Psoas muscle (tissue), 8 donors: ENCODE measurements at regions of chr4 and their contacts with region 1.

Region 1: DNA sequence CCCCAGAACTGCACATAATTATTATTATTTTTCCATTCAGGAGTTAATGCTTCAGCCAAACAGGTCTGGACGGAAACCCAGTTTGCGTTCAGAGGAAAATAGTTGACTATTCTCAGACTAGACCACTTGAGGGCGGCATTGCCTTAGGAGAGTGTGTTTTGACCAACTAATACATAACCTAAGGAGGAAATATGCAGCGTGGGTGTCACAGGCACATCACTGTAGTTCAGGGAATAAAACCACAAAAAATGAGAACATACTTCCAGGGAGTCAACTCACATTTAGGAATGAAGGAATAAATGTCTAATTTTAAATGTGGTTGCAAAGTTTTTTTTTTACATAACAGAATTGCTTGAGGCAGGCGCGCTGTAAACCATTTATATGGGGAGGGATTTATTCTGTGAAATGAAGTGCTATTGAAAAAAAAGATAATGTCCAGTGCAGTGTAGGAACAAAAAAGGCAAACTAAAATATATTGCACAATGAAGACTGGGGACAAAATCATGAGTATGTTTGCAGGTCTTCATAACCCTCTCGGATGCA is 93.3 kb downstream of the SYNPO2 start:
- DNase-seq: peak in 1 of 2 donors; percentile 60
- ATAC-seq: peak; percentile 65 to 74 (median 70)
- H3K4me3 ChIP-seq: peak overlapping the region; percentile 57
- H3K27ac ChIP-seq: peak overlapping the region; percentile 95
- H3K4me1 ChIP-seq: peaks cover 69% of the 10 kb centered on the region
- H3K27me3 ChIP-seq: no peaks in the 10 kb centered on the region
- CTCF ChIP-seq: peak; percentile 81

Region 2: DNA sequence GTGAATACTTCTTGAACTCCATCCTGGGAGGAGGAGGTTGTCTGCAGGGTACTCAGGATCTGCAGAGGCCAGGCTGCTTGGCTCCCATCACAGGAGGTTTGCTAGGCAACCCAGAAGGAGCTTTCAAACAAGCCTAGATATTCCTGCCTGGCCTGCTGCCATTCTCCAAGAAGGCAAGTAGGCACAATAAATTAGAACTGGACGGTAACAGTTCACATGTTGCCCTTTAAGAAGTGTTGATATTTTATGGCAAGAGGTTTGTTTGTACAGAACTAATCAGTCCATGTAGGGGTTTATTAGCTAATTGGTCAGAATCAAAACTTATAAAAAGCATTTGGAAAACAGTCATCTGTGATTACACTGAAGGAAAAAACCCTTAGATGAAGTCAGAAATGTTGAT is 53.9 kb before region 1 on chr4:
- intact Hi-C with region 1: no loop called
- DNase-seq: no peak
- ATAC-seq: peak in 2 of 4 donors; percentile 50 to 66
- H3K4me3 ChIP-seq: no peak overlapping the region
- H3K27ac ChIP-seq: no peak overlapping the region
- H3K4me1 ChIP-seq: peaks cover 17% of the 10 kb centered on the region
- H3K27me3 ChIP-seq: no peaks in the 10 kb centered on the region
- CTCF ChIP-seq: no peak

Region 3: GRCh38 chr4:119034276-119035008 is 52.5 kb after region 1 on chr4:
- intact Hi-C with region 1: loop called in 1 of 2 experiments (anchors 5 kb)
- DNase-seq: no peak
- ATAC-seq: peak; percentile 15 to 48 (median 20)
- H3K4me3 ChIP-seq: peak overlapping the region; percentile 77
- H3K27ac ChIP-seq: peak overlapping the region; percentile 98
- H3K4me1 ChIP-seq: peaks cover 36% of the 10 kb centered on the region
- H3K27me3 ChIP-seq: no peaks in the 10 kb centered on the region
- CTCF ChIP-seq: peak; percentile 27

Region 4: GRCh38 chr4:119041951-119042560 is 60.1 kb after region 1 on chr4:
- intact Hi-C with region 1: loop called in 1 of 2 experiments (anchors 2 kb)
- DNase-seq: no peak
- ATAC-seq: peak; percentile 61 to 68 (median 64)
- H3K4me3 ChIP-seq: peak overlapping the region; percentile 40
- H3K27ac ChIP-seq: peak overlapping the region; percentile 98
- H3K4me1 ChIP-seq: peaks cover 66% of the 10 kb centered on the region
- H3K27me3 ChIP-seq: no peaks in the 10 kb centered on the region
- CTCF ChIP-seq: peak; percentile 72

Region 5: DNA sequence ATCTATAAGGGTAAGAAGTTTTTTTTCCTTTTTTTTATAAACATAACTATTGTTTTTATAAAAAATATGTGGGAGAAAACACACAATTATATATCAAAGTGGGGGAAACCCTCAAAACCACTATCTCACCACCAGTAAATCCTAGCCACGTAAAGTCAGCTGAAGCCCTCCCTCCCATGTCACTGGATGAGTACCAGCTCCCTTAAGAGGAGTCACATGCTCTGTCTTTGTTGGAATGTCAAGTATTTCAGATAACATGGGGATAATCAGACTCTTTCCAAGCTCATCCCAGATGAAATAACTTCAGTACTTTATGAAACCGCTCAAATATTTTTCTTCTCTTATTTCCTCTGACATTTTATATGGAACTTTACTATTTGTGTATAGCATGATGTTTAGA is 156.1 kb after region 1 on chr4:
- intact Hi-C with region 1: loop called in 1 of 2 experiments (anchors 10 kb)
- DNase-seq: no peak
- ATAC-seq: no peak
- H3K4me3 ChIP-seq: peak overlapping the region; percentile 50
- H3K27ac ChIP-seq: peak overlapping the region; percentile 72
- H3K4me1 ChIP-seq: peaks cover 31% of the 10 kb centered on the region
- H3K27me3 ChIP-seq: no peaks in the 10 kb centered on the region
- CTCF ChIP-seq: no peak

Region 6: GRCh38 chr4:119149110-119149509 is 167.2 kb after region 1 on chr4:
- intact Hi-C with region 1: loop called (anchors 5 to 10 kb)
- DNase-seq: no peak
- ATAC-seq: peak; percentile 21 to 55 (median 42)
- H3K4me3 ChIP-seq: no peak overlapping the region
- H3K27ac ChIP-seq: peak overlapping the region; percentile 69
- H3K4me1 ChIP-seq: no peaks in the 10 kb centered on the region
- H3K27me3 ChIP-seq: no peaks in the 10 kb centered on the region
- CTCF ChIP-seq: no peak

Region 7: GRCh38 chr4:119212234-119212963 is 230.5 kb after region 1 on chr4 and contains the start of gene USP53:
- intact Hi-C with region 1: loop called (anchors 2 to 10 kb)
- DNase-seq: peak; percentile 96 to 98
- ATAC-seq: peak; percentile 93 to 96 (median 96)
- H3K4me3 ChIP-seq: peak within 1 kb of the TSS; percentile 91
- H3K27ac ChIP-seq: peak within 1 kb of the TSS; percentile 99
- H3K4me1 ChIP-seq: peaks cover 23% of the 10 kb centered on the region
- H3K27me3 ChIP-seq: no peaks in the 10 kb centered on the region
- CTCF ChIP-seq: no peak
- total RNA-seq, gene USP53: 43.8 to 89.5 (median 57.3) TPM

Region 8: DNA sequence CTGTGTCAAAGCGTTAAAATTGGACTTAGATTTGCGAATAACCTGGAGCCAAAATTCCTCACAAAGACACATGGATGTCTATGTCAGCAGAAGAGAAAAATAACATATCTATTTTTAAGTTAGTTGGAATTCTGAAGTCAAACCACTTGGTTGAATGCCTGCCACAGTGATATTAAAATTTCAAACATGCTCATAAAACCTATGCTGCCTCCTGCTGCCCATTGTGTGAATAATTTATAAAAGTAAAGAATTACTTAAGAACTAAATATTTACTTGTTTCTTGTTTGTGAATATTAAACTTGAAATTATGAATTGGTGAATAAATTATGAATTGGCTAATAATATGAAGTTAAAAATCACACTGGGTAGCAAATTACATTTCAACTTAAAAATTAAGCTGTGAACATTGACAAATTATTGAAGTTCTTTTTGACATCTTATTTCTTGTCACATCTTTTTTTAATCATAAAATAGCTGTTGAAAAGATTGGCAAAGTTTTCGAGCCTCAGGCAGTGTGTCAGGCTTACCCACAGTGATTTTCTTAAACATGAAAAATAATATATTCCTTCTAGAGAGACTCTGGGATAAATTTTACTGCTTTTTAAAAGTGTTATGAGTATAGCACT is 304.6 kb after region 1 on chr4:
- intact Hi-C with region 1: loop called (anchors 5 kb)
- DNase-seq: no peak
- ATAC-seq: peak; percentile 68 to 86 (median 82)
- H3K4me3 ChIP-seq: peak overlapping the region; percentile 49
- H3K27ac ChIP-seq: peak overlapping the region; percentile 77
- H3K4me1 ChIP-seq: peaks cover 55% of the 10 kb centered on the region
- H3K27me3 ChIP-seq: no peaks in the 10 kb centered on the region
- CTCF ChIP-seq: peak; percentile 81